Activated CD4-positive, alpha-beta T cell treated with anti-CD3 and anti-CD28 coated beads, Interleukin-2, amount 10 ng/mL, durations not matched to agents 7 days and 5 days (primary cell): ENCODE measurements at regions of chr19 and their contacts with region 1.

Region 1: DNA sequence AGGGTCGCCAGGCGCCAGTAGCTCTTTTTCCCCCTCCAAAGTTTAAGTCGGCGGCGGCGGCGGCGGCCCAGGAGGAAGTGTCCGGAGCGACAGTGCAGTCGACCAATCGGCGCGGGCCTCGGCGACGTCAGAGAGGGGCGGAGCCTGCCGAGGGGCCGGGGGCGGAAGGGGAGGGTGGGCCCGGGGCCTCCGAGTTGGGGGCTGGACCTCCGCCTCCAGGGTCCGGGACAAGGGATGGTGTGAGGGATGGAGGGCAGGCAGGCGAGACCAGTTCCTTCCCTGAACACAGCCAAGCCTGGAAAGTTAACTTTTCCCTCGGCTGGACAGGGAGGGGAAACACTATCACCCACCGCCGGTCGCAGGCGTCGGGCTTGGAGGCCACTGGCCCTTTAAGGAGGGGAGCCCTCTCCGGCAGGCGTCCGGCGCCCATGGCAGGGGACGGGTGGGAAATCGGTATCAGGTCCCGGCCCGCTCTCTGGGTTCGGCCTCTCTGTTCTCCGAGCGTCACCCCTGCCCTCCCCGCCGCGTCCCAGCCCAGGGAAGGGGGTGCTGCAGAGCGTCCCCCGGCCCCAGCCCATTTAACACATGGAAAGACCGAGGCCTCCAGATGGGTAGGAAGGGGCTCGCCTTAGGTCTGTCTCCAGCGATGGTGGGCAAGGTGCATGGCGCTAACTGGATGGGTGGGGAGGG is at the start of gene PRKD2:
- DNase-seq: peak; percentile 91
- H3K4me3 Mint-ChIP-seq: peak within 1 kb of the TSS; percentile 94
- H3K27ac Mint-ChIP-seq: peak within 1 kb of the TSS; percentile 96
- H3K4me1 Mint-ChIP-seq: peaks cover 44% of the 10 kb centered on the region
- H3K27me3 Mint-ChIP-seq: no peaks in the 10 kb centered on the region
- total RNA-seq, gene PRKD2: 175 to 178 TPM

Region 2: GRCh38 chr19:46404055-46404752 is 313.0 kb before region 1 on chr19:
- CTCF ChIA-PET with region 1: no interaction called
- POLR2A ChIA-PET with region 1: no interaction called
- DNase-seq: no peak
- H3K4me3 Mint-ChIP-seq: no peak overlapping the region
- H3K27ac Mint-ChIP-seq: no peak overlapping the region
- H3K4me1 Mint-ChIP-seq: peaks cover 14% of the 10 kb centered on the region
- H3K27me3 Mint-ChIP-seq: peaks cover 49% of the 10 kb centered on the region

Region 3: DNA sequence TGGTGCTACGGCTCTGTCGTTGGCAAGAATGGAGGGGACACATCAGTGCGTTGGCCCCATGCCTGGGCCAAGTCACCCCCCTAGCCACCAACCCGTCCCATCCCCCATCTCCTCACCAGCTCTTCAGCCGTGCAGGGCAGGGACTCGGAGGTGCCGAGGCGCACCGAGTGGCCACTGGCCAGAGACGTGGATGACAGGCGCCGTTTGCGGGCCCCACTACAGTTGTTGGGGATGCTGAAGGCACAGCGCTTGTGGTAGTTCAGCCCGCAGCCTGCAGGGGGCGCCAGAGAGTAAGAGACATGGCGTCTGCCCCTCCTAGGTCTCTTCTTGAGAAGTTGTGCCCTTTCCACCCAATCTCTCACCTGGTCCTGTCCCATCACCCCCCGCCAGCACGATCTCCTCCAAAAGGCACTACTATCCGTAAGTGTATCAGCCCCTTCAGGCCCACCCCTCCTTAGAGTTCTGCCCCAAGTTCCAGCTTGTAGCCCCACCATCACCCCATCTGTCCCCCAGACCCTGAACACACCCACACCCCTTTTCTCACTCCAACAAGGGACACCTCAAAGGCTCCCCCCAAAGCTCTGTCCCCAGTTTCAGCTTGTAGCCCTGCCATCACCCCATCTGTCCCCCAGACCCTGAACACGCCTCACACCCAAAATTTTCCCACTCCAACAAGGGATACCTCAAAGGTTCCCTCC is 12.7 kb before region 1 on chr19:
- CTCF ChIA-PET with region 1: interaction called, 10 read pairs
- POLR2A ChIA-PET with region 1: no interaction called
- DNase-seq: peak; percentile 89
- H3K4me3 Mint-ChIP-seq: no peak overlapping the region
- H3K27ac Mint-ChIP-seq: peak overlapping the region; percentile 78
- H3K4me1 Mint-ChIP-seq: peaks cover 10% of the 10 kb centered on the region
- H3K27me3 Mint-ChIP-seq: no peaks in the 10 kb centered on the region